RWPE1 (cell line): ENCODE measurements at regions of chr5 and their contacts with region 1.

Region 1: GRCh38 chr5:1232780-1233179 is 7.6 kb downstream of the SLC6A18 start:
- DNase-seq: no peak
- H3K27ac ChIP-seq: no peak overlapping the region
- CTCF ChIP-seq: no peak

Region 2: GRCh38 chr5:945691-946551 is 286.9 kb before region 1 on chr5:
- CTCF ChIA-PET with region 1: no interaction called
- POLR2A ChIA-PET with region 1: no interaction called
- DNase-seq: no peak
- H3K27ac ChIP-seq: peak overlapping the region; percentile 41
- CTCF ChIP-seq: no peak

Region 3: DNA sequence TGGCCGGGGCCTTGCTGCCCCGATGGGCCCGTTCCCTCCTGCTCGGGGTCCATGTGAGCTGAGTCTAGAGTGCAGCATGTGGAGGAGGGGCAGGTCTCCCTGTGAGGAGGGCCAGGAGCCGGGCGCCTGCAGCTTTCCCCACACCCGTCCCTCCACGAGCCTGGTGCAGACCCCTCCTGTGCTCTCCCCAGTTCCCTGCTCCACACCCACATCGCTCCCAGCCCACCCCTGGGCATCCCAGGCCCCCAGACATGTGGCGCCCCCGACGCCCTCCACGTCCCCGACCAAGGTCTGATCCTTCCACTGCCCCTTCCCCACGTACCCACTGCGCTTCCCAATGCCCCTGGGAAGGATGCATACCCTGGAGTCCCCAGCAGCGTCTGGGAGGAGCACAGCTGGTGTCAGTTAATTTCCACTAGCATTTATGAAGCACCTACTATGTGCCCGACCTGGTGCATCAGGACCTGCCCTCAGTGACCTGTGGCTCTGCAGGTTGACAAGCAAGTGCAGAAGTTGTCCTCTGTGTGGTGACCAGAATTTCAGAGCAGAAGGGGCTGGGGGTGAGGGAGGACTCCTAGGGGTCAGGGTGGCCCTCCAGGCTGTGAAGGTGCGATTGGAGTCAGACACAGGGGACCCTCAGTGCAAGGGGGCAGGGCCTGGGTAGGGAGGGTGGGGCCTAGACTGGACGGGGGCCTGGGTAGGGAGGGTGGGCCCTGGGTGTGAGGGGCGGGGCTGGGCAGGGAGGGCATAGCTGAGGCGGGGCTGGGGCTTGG is 18.4 kb before region 1 on chr5:
- CTCF ChIA-PET with region 1: no interaction called
- POLR2A ChIA-PET with region 1: no interaction called
- DNase-seq: no peak
- H3K27ac ChIP-seq: no peak overlapping the region
- CTCF ChIP-seq: no peak

Region 4: GRCh38 chr5:2387634-2388325 is 1155.0 kb after region 1 on chr5:
- CTCF ChIA-PET with region 1: interaction called, 10 read pairs
- POLR2A ChIA-PET with region 1: no interaction called
- DNase-seq: no peak
- H3K27ac ChIP-seq: no peak overlapping the region
- CTCF ChIP-seq: no peak